ENCODE measurements at regions of chr6 and their contacts with region 1.

Region 1: DNA sequence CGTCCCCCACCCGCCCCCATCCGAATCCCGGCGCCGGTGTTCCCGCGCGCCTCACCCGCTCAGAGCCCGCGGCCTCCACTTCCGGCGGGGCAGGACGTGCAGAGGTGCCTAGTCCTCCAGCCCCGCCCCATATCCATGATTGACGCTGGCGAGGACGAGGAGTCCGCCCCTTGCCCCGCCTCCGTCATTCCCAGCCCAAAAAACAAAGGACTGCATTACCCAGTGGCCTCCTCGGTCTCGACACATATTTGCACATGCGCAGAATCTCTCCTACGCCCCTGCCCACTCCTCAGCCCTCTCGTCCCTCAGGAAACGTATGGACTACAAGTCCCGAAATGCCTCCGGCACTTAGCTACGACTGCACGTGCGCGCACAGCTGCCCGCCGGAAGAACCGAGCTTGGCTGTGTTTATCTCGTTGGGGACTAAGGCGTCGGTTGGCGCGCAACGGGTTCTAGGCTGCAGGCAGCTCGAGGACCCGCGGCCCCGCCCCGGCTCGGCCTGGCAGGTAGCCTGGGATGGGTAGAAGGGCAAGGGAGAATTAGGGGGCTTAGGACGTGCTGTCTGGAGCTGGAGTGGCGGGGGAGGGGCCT is at the starts of genes KLHDC3 and MEA1:
- DNase-seq: peak; percentile 99 to 100
- H3K4me3 ChIP-seq: peak within 1 kb of the TSS; percentile 76 to 81
- H3K27ac ChIP-seq: peak within 1 kb of the TSS; percentile 81 to 82
- H3K4me1 ChIP-seq: peaks cover 13 to 33% of the 10 kb centered on the region in 2 donors
- H3K27me3 ChIP-seq: no peaks in the 10 kb centered on the region
- CTCF ChIP-seq: no peak
- total RNA-seq, gene KLHDC3: 64.0 TPM
- total RNA-seq, gene MEA1: 61.1 TPM

Region 2: DNA sequence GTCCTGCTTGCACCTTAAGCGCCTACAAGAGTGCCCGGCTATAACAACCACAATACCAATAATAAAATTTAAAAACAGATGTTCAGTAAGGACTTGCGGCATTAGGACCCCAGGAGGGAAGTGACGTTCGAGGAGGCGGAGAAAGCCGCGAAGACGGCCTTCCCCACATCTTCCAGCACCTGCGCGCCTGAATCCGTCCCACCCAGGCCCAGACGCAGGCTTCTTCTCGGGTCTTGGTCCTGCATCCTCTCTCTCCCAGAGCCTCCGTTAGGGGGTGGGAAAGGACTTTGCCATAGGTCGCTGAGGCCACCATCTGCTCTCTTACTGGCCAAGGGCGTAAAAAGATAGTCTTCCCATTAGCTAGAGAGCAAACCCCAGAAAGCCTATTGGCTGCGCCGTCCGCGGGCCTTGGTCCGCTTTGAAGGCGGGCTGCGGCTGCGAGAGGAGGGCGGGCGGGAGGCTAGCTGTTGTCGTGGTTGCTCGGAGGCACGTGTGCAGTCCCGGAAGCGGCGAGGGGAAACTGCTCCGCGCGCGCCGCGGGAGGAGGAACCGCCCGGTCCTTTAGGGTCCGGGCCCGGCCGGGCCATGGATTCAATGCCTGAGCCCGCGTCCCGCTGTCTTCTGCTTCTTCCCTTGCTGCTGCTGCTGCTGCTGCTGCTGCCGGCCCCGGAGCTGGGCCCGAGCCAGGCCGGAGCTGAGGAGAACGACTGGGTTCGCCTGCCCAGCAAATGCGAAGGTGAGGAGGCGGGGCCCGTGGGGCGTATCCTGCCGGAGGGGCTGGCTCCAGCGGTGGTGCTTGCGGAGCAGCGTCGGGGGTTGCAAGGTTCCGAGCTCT is 84.7 kb before region 1 on chr6 and contains the start of gene CNPY3:
- intact Hi-C with region 1: loop called (anchors 2 kb)
- DNase-seq: peak; percentile 86 to 97
- H3K4me3 ChIP-seq: peak within 1 kb of the TSS; percentile 69 to 79
- H3K27ac ChIP-seq: peak within 1 kb of the TSS; percentile 81 to 87
- H3K4me1 ChIP-seq: peaks cover 0 to 12% of the 10 kb centered on the region in 2 donors
- H3K27me3 ChIP-seq: no peaks in the 10 kb centered on the region
- CTCF ChIP-seq: no peak
- total RNA-seq, gene CNPY3: 49.6 TPM

Region 3: DNA sequence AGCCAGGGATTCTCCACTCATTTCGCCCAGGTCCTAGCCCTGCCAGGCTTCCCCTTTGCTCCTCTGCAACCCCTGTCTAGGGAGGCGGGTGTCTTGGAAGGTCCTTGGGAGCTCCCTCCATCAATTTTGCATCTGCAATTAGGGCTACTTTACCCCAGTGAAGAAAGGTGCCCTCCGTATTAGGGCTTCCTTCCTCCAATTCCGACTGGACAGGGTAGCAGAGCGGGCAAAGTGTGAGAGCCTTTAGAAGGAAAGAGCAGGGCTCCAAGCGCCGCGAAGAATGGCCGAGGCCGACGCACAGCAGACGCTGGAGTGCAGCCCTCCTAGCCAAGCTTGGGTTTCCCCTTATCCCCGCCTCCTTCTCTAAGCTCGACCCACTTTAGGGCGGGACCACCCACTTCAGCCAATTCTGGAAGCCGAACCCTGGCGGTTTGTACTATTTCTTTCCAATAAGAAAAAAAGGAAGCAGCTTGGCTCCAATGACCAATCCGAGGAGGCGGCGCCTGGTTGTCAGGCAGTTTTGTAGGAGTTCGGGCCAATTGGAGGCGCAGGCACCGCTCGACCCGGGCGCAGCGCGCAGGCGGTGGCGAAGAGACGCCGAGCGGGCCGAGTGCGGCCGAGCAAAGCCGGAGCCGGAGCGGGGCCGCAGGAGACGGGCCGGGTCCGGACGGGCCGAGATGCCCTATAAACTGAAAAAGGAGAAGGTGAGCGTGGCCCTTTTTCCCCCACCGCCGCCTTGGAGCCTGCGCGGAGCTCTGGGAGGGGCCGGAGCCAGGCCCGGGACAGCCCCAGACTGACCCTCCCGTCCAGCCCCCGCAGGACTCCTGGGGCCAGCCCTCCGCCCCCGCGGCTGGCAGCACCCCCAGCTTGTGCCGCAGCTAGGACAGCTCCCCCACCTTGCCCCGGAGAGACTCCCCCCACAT is 29.7 kb before region 1 on chr6 and contains the start of gene PPP2R5D:
- intact Hi-C with region 1: loop called (anchors 1 kb)
- DNase-seq: peak; percentile 95 to 99
- H3K4me3 ChIP-seq: peak within 1 kb of the TSS; percentile 69 to 99
- H3K27ac ChIP-seq: peak within 1 kb of the TSS; percentile 76 to 92
- H3K4me1 ChIP-seq: peaks cover 18 to 47% of the 10 kb centered on the region in 2 donors
- H3K27me3 ChIP-seq: no peaks in the 10 kb centered on the region
- CTCF ChIP-seq: no peak
- total RNA-seq, gene PPP2R5D: 27.7 TPM

Region 4: GRCh38 chr6:43053545-43054205 is 39.7 kb after region 1 on chr6 and contains the start of gene CUL7:
- intact Hi-C with region 1: no loop called
- DNase-seq: peak; percentile 69 to 96
- H3K4me3 ChIP-seq: peak within 1 kb of the TSS; percentile 71
- H3K27ac ChIP-seq: peak within 1 kb of the TSS; percentile 87 to 98
- H3K4me1 ChIP-seq: peaks cover 5 to 22% of the 10 kb centered on the region in 2 donors
- H3K27me3 ChIP-seq: no peaks in the 10 kb centered on the region
- CTCF ChIP-seq: no peak
- total RNA-seq, gene CUL7: 26.7 TPM

Region 5: DNA sequence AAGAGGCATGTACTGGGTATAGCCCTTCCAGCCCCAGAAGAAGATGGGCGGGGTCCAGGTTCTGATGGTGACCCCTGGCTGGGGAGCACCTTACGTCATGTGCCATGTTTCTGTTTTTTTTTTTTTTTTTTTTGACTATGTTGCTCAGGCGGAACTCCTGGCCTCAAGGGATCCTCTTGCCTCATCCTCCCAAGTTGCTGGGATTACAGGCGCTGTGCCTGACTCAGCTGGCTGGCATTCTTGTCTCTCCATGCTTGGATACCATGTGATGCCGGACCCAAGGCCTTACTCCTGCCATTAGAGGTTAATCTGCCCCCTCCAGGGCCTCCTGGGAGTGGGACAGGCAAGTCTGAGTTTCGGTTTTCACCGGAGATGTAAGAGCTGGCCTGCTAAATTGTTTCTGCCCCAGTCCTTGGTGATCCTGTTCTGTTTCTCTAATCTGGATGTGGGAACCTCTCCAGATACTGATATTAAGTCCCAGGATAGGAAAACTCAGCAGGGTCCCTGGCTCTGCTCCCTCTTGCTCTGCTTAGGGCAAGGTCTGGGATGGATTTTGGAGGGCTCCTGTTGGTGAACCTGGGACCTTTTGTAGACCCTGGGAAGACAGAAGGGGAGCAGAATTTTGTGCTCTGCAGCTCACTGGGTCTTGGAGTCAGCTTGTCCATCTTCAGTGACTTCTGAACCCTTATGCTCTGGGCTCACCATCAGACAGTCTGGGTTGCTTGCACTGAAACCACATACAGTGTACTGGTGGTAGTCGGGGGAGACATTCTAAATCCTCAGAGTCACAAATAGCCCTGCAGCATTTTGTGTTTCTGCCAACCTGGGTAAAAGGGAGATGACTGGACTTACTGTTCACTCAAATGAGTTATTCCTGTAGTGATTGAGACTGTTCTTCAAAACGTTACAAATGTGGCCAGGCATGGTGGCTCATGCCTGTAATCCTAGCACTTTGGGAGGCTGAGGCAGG is 107.3 kb after region 1 on chr6:
- intact Hi-C with region 1: loop called (anchors 5 kb)
- DNase-seq: peak; percentile 52 to 94
- H3K4me3 ChIP-seq: no peak overlapping the region
- H3K27ac ChIP-seq: peak overlapping the region; percentile 70 to 71
- H3K4me1 ChIP-seq: peaks cover 2 to 15% of the 10 kb centered on the region in 2 donors
- H3K27me3 ChIP-seq: no peaks in the 10 kb centered on the region
- CTCF ChIP-seq: no peak

Region 6: GRCh38 chr6:43174263-43175112 is 160.6 kb after region 1 on chr6:
- intact Hi-C with region 1: loop called (anchors 5 kb)
- DNase-seq: peak; percentile 98 to 99
- H3K4me3 ChIP-seq: peak overlapping the region; percentile 88 to 95
- H3K27ac ChIP-seq: peak overlapping the region; percentile 98
- H3K4me1 ChIP-seq: peaks cover 8 to 30% of the 10 kb centered on the region in 2 donors
- H3K27me3 ChIP-seq: no peaks in the 10 kb centered on the region
- CTCF ChIP-seq: peak in 1 of 3 experiments; percentile 16

Measured in ascending aorta (tissue), 2 donors.